GM10248 (cell line): ENCODE measurements at regions of chr7 and their contacts with region 1.

Region 1: DNA sequence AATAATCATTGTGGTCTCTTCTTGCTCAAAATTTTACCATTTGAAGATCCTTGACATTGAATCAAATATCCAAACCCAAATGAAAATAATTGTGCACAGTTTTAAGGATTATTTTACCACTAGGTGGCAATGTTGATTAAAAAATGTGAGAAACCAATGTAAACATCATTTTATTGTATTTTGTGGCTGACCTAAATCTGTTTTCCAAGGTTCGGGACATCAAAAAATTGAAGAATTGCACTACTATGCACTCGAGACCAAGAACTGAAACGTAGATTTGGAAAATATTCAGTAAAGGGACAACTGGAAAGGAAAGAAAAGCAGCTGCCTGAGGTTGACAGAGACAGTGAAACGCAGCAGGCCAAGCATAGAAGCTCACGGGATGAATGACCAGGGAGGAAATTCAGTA is 259.3 kb downstream of the SNX13 start:
- DNase-seq: no peak
- CTCF ChIP-seq: peak; percentile 34

Region 2: GRCh38 chr7:17699696-17700095 is 18.7 kb after region 1 on chr7:
- CTCF ChIA-PET with region 1: interaction called, 10 read pairs
- POLR2A ChIA-PET with region 1: no interaction called
- DNase-seq: no peak
- CTCF ChIP-seq: no peak

Region 3: GRCh38 chr7:18345641-18346234 is 664.8 kb after region 1 on chr7:
- CTCF ChIA-PET with region 1: interaction called, 21 read pairs
- POLR2A ChIA-PET with region 1: no interaction called
- DNase-seq: no peak
- CTCF ChIP-seq: peak; percentile 69

Region 4: DNA sequence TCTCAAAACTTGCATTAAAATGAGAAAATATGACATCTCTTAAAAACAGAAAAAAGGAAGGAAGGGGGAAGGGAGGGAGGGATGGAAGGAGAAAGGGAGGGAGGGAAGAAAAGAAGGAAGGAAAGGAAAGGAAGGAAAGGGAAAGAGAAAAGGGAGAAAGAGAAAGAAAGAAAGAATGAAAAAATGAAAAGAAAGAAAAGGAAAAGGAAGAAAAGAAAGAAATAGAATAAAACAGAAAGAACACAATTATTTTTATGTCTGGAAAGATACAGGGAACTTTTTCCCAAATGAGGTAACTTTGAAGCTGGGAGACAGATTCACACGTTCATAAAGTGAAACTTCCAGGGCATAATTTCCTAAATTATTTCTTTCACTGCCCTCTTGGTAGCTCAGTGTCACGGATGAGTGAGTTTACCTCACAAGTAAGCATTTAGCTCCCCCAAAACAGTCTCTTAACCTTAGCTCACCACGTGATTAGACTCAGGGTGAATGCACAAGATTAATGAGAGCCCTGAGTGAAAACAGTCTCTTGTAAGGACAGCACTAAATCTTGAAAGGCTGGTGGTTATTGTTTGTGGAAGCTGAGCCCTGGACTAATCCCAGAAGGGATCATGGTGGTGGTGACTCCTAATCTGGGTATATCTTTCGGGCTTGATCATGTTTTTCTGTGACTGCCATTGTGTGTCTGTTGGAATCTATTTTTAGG is 740.5 kb after region 1 on chr7:
- CTCF ChIA-PET with region 1: no interaction called
- POLR2A ChIA-PET with region 1: no interaction called
- DNase-seq: peak; percentile 7
- CTCF ChIP-seq: no peak